A549 (cell line): ENCODE measurements at regions of chr16 and their contacts with region 1.

Region 1: DNA sequence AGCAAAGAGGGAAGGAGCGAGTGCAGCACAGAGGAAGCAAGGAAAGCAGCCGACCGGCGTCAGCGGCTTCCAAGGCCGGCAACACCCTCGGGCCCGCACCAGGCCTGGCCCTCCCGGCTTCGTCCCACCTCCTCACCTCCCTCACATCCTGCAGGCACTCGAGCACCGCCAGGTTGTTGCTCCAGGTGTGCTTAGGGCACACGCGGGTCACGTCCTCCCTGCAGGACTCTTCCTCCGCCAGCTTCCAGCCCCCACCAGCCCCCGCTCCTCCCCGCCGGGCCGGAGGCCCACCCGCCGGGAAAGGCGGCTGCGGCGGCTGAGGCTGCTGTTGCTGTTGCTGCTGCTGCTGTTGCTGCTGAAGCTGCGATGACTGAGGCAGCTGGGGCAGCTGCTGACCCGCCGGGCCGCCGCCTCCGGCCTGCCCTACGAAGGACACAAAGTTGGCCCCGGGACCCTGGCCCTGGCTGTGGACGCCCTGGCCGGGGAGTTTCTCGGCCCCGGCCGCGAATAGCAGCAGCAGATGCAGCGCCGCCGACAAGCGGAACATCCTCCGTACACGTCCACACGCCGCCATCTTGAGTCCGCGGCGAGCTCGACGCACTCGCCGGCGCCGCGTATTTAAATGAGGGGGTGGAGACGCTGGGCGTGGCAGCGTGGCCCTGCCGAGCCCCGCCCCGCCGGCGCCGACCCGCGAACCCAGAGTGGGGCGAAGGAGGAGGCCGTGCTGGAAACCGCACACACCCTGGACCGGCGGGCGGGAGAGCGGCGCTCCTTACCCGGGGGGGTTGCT is at the start of gene GLG1:
- DNase-seq: peak; percentile 56 to 91
- ATAC-seq: peak; percentile 94 to 97
- H3K4me3 ChIP-seq: peak within 1 kb of the TSS; percentile 89
- H3K27ac ChIP-seq: peak within 1 kb of the TSS; percentile 92 to 96
- H3K4me1 ChIP-seq: peaks cover 35% of the 10 kb centered on the region
- CTCF ChIP-seq: no peak
- EP300 ChIP-seq: no peak
- POLR2A ChIP-seq: peak; percentile 99
- RAD21 ChIP-seq: 0 out of 5 replicates have a peak, but pooled peaks of 1 of the 2 experiments have one; percentile 27
- polyA plus RNA-seq, gene GLG1: 90.6 and 91.7 TPM in 2 replicates

Region 2: DNA sequence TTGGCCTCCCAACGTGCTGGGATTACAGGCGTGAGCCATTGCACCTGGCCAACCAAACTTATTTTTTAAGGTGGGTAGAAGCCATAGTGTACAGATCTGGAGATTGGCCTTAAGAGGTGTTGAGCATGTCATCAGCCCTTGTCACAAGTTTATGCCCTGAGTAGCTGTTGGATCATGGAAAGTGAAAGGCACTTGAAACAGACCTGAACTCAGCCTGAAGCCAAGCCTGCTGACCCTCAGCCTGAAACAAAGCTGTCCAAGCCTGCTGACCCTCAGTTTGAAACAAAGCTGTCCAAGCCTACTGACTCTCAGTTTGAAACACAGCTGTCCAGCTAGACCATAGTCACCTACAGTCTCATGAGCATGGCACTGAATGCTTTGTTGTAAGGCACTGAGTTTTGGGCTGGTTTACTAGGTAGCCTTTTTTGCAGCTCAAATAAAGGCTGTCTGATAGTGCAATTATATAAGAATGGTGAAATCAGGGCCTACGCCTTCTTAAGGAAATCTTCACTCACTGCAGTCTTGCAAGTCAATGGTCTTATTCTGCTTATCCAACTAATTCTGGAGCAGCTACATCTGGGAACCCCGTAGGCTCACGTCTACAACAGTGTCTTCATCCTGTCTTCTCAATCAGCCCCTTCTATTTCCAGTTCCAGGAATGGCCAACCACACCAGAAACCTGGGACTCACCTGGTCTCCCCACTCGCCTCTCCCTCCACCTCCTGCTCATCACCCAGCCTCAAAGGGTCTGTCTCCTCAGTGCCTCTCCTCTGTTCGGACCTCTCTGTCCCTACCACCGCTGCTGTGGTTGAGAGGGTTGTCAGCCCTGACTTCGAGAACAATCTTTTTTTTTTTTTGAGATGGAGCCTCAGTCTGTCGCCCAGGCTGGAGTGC is 233.5 kb before region 1 on chr16:
- CTCF ChIA-PET with region 1: no interaction called
- POLR2A ChIA-PET with region 1: no interaction called
- DNase-seq: no peak
- ATAC-seq: no peak
- H3K4me3 ChIP-seq: no peak overlapping the region
- H3K27ac ChIP-seq: no peak overlapping the region
- H3K4me1 ChIP-seq: no peaks in the 10 kb centered on the region
- CTCF ChIP-seq: no peak
- EP300 ChIP-seq: no peak
- POLR2A ChIP-seq: no peak
- RAD21 ChIP-seq: no peak

Region 3: GRCh38 chr16:74480141-74481029 is 126.3 kb before region 1 on chr16:
- CTCF ChIA-PET with region 1: no interaction called
- POLR2A ChIA-PET with region 1: interaction called, 10 read pairs
- DNase-seq: peak; percentile 85 to 89
- ATAC-seq: peak; percentile 98 to 99
- H3K4me3 ChIP-seq: peak overlapping the region; percentile 24; the same call in 1 of the 3 replicates
- H3K27ac ChIP-seq: peak overlapping the region; percentile 66 to 77
- H3K4me1 ChIP-seq: peaks cover 46% of the 10 kb centered on the region
- CTCF ChIP-seq: no peak
- EP300 ChIP-seq: no peak
- POLR2A ChIP-seq: no peak
- RAD21 ChIP-seq: no peak

Region 4: GRCh38 chr16:74617206-74617788 is 10.6 kb after region 1 on chr16:
- CTCF ChIA-PET with region 1: interaction called, 23 read pairs
- POLR2A ChIA-PET with region 1: interaction called, 11 read pairs
- DNase-seq: no peak
- ATAC-seq: no peak; a peak in 3 of 6 replicates
- H3K4me3 ChIP-seq: no peak overlapping the region
- H3K27ac ChIP-seq: no peak overlapping the region
- H3K4me1 ChIP-seq: no peaks in the 10 kb centered on the region
- CTCF ChIP-seq: no peak
- EP300 ChIP-seq: no peak
- POLR2A ChIP-seq: no peak
- RAD21 ChIP-seq: no peak

Region 5: DNA sequence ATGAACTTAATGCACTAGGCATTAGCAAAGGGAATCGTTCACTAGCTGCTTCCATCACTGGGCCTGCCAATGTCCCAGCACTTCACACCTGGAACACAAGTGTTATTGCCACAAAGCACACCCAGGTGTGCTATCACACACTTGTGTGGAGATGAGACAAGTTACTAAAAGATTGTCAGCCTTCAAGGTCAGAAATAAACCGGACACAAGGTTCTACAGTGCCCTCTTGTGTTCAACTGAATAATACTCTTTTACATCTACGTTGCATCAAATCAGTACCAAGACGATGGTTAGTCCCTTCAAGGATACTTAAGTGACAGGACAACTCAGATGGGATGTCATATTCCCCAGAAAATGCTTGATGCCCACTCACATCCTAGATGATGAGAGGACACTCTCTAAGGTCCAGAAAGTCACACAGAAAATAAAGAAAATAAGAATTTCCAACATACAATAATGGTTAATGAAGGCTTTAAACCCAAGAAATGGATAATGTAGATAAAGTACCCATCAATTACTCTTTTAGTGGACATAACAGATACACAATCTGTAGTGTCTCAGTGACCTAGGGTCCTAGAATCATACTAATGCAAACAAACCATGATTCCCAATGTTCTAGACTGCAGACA is 16.6 kb after region 1 on chr16:
- CTCF ChIA-PET with region 1: interaction called, 23 read pairs
- POLR2A ChIA-PET with region 1: interaction called, 5 read pairs
- DNase-seq: peak; percentile 57 to 68
- ATAC-seq: peak; percentile 69 to 75; a peak in 5 of 6 replicates
- H3K4me3 ChIP-seq: no peak overlapping the region
- H3K27ac ChIP-seq: no peak overlapping the region
- H3K4me1 ChIP-seq: no peaks in the 10 kb centered on the region
- CTCF ChIP-seq: peak; percentile 79
- EP300 ChIP-seq: no peak
- POLR2A ChIP-seq: no peak
- RAD21 ChIP-seq: peak; percentile 61 to 72